Activated T-helper 1 cell treated with anti-CD3 and anti-CD28 coated beads, Interleukin-12 subunit alpha, Interleukin-12 subunit beta, Interleukin-2, Interleukin-4 antibody, amounts not matched to agents 30 ng/mL and 10 ng/mL and 1 ng/mL, durations not matched to agents 14 hours and 24 hours and 36 hours (primary cell): ENCODE measurements at regions of chr1 and their contacts with region 1.

Region 1: DNA sequence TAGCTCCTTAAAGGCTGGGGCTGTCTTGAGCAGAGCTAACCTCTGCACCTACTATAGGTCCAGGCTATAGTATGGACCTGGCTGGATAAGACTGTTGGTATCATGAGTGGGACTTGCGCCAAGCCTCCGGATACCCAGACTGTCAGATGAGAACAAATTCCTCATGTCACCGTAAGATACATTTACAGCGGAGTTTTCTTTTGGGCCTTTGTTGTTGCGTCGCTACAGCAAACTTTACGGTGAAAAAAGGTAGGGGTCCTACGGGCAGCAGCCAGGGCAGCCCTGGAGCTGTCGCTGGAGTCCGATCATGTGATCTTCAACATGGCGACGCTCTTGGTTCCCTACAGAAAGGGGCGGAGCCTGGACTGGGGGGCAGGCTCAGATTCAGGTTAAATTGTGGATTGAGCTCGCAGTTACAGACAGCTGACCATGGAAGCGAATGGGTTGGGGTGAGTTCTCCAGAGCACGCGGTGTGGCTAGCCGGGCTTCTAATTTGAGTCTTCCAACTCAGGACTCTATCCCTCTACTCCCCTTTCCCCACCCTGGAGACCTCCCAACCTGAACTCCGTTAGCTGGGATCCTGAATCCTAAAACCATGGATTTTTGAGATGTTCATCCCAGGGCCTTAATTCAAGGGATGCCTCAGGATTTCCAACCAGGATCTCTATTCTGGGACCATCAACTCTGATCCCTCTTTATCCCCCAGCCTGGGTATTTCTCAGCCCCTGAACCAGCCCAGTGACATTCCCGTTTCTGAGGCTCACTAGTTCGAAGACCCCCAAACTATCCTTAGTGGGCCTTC is at the start of gene UROD:
- DNase-seq: peak; percentile 86
- H3K4me3 Mint-ChIP-seq: peak within 1 kb of the TSS; percentile 84
- H3K27ac Mint-ChIP-seq: peak within 1 kb of the TSS; percentile 90
- H3K4me1 Mint-ChIP-seq: peaks cover 58% of the 10 kb centered on the region
- H3K27me3 Mint-ChIP-seq: no peaks in the 10 kb centered on the region
- total RNA-seq, gene UROD: 79.9 and 81.9 TPM in 2 replicates

Region 2: DNA sequence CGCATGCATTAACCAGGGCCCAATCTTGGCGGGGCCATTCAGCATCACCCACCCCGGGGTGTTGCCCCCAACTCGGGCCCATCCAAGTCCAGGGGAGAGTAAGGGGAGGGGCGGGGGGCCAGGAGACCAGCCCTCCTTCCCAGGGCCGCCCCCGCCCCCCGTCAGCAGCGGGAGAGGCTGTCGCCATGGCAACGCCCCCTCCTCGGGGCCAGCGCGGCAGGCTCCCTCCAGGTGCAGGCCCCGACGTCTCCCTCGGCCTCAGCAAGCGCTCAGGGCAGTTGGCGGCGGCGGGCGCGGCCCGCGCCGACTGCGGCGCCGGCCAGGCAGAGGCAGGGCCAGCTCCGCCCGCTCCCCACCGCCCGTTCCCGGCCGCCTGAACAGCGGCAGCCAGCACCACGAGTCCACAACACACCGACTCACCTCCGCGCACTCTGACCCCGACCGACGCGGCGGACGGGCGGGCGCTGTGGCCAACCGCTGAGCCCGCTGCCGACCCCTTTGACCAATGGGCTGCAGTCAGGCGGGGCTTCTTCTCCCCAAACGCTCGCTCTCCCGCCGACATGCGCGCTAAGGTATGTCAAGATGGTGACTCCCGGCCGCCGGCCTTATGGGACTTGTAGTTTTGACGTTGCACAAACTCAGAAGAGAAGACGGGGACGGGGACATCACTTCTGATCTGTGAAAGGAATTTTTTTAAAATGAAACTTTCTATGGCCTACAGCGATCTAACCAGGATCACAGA is 657.0 kb before region 1 on chr1 and contains the start of gene ERI3:
- intact Hi-C with region 1: loop called (anchors 5 kb)
- DNase-seq: peak; percentile 95
- H3K4me3 Mint-ChIP-seq: peak within 1 kb of the TSS; percentile 93
- H3K27ac Mint-ChIP-seq: peak within 1 kb of the TSS; percentile 88
- H3K4me1 Mint-ChIP-seq: peaks cover 34% of the 10 kb centered on the region
- H3K27me3 Mint-ChIP-seq: no peaks in the 10 kb centered on the region
- total RNA-seq, gene ERI3: 51.4 and 55.4 TPM in 2 replicates

Region 3: GRCh38 chr1:44721485-44722361 is 290.3 kb before region 1 on chr1:
- intact Hi-C with region 1: loop called (anchors 2 kb)
- DNase-seq: peak; percentile 75
- H3K4me3 Mint-ChIP-seq: peak overlapping the region; percentile 77
- H3K27ac Mint-ChIP-seq: peak overlapping the region; percentile 97
- H3K4me1 Mint-ChIP-seq: peaks cover 71% of the 10 kb centered on the region
- H3K27me3 Mint-ChIP-seq: no peaks in the 10 kb centered on the region

Region 4: DNA sequence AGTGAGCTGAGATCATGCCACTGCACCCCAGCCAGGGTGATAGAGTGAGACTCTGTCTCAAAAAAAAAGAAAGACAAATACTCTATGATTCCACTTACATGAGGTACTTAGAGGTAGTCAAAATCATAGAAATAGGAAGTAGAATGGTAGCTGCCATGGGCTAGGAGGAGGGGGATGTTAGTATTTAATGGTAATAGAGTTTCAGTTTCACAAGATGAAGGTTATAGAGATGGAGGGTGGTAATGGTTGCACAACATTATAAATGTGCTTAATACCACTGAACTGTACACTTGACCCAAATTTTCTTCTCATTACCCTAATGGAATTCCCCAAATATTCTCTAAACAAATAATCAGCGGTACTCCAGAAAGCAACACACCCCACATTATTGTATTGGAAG is 38.4 kb before region 1 on chr1:
- intact Hi-C with region 1: no loop called
- DNase-seq: no peak
- H3K4me3 Mint-ChIP-seq: no peak overlapping the region
- H3K27ac Mint-ChIP-seq: no peak overlapping the region
- H3K4me1 Mint-ChIP-seq: no peaks in the 10 kb centered on the region
- H3K27me3 Mint-ChIP-seq: no peaks in the 10 kb centered on the region

Region 5: DNA sequence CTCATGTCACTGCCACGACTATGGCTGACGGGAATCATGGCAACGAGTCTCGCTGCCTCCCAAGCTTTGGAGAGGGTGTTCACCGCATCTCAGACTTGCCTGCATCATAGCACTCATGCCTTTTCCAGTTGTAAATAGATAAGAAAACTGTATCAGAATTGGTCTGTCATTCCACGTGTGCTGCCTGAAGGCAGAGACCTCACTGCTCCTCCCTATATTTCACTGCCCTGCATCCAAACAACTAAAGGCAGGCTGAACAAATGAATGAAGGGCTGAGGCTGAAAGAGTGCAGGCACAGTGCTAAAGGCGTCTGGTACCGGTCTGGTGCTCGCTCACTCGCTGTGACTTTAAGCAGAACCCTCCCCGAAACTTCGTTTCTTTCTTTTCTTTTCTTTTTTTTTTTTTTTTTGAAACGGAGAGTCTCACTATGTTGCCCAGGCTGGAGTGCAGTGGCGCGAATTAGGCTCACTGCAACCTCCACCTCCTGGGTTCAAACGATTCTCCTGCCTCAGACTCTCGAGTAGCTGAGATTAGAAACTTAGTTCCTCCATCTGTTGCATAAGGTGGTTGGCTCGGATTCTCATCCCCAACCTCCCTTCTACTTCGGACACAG is 26.2 kb before region 1 on chr1:
- intact Hi-C with region 1: loop called (anchors 1 kb)
- DNase-seq: no peak
- H3K4me3 Mint-ChIP-seq: peak overlapping the region; percentile 100
- H3K27ac Mint-ChIP-seq: peak overlapping the region; percentile 94
- H3K4me1 Mint-ChIP-seq: peaks cover 21% of the 10 kb centered on the region
- H3K27me3 Mint-ChIP-seq: peaks cover 2% of the 10 kb centered on the region

Region 6: DNA sequence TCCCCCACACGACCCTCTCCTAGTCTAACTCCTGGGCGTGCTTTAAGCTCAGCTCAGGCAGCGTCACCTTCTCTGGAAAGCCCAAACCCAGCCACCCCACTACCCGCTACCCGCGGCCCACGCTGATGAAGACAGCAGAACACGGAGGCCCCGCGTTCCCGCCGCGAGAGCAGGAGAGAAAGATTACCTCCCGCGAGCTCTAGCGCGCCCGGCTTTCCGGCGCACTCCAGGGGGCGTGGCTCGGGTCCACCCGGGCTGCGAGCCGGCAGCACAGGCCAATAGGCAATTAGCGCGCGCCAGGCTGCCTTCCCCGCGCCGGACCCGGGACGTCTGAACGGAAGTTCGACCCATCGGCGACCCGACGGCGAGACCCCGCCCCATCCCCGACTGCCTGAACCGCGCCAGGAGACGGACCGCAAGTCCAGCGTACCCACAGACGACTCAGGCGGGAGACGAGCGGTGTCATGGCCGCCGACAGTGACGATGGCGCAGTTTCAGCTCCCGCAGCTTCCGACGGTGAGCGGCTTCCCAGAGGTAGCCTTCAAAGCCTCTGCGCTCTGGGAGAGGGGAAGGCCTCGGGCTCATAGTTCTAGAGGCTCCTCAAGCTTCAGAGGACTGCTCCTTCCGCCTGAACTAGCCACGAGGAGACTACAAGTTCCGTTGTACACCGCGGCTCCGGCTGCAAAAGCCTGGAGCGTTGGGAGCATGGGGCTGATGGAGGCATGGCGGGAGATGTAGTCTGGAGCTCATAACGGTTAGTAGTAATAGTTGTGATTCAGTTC is 327.9 kb after region 1 on chr1 and contains the starts of genes MUTYH and TOE1:
- intact Hi-C with region 1: loop called (anchors 1 kb)
- DNase-seq: peak; percentile 94
- H3K4me3 Mint-ChIP-seq: peak within 1 kb of the TSS; percentile 99
- H3K27ac Mint-ChIP-seq: peak within 1 kb of the TSS; percentile 100
- H3K4me1 Mint-ChIP-seq: peaks cover 39% of the 10 kb centered on the region
- H3K27me3 Mint-ChIP-seq: no peaks in the 10 kb centered on the region
- total RNA-seq, gene MUTYH: 53.4 and 55.9 TPM in 2 replicates
- total RNA-seq, gene TOE1: 39.1 and 41.4 TPM in 2 replicates

Region 7: GRCh38 chr1:46247436-46248121 is 1235.5 kb after region 1 on chr1 and contains the start of gene RAD54L:
- intact Hi-C with region 1: loop called (anchors 5 kb)
- DNase-seq: peak; percentile 95
- H3K4me3 Mint-ChIP-seq: peak within 1 kb of the TSS; percentile 97
- H3K27ac Mint-ChIP-seq: peak within 1 kb of the TSS; percentile 94
- H3K4me1 Mint-ChIP-seq: peaks cover 39% of the 10 kb centered on the region
- H3K27me3 Mint-ChIP-seq: no peaks in the 10 kb centered on the region
- total RNA-seq, gene RAD54L: 49.7 and 50.2 TPM in 2 replicates